ENCODE measurements at regions of chr9 and their contacts with region 1.

Region 1: GRCh38 chr9:69549310-69550202 is 122.6 kb downstream of the APBA1 start:
- DNase-seq: peak; percentile 4
- ATAC-seq: peak; percentile 68
- H3K4me3 ChIP-seq: no peak overlapping the region
- H3K27ac ChIP-seq: no peak overlapping the region
- H3K4me1 ChIP-seq: no peaks in the 10 kb centered on the region
- H3K27me3 ChIP-seq: no peaks in the 10 kb centered on the region
- CTCF ChIP-seq: peak; percentile 78

Region 2: DNA sequence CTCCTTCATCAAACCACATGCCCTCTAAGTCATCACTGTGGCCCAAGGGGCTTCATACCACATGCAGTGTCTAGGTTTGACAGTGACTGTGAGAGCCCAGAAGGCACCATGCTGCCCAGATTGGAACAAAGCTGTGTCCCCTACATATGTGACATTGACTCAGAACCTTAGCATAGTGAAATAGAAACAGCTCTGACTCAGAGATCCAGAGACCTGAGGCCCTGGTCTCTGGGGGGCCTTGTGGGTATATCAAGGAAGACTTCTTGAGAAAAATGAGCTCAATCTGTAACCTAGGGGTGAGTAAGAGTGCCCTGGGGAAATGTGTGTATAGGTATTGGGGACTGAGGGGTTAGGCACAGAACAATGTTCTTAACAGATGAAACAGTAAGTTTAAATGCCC is 231.7 kb before region 1 on chr9:
- CTCF ChIA-PET with region 1: no interaction called
- POLR2A ChIA-PET with region 1: no interaction called
- in situ Hi-C with region 1: no loop called
- intact Hi-C with region 1: no loop called
- DNase-seq: no peak
- ATAC-seq: no peak
- H3K4me3 ChIP-seq: no peak overlapping the region
- H3K27ac ChIP-seq: no peak overlapping the region
- H3K4me1 ChIP-seq: no peaks in the 10 kb centered on the region
- H3K27me3 ChIP-seq: peaks cover 3% of the 10 kb centered on the region; the same call in 1 of the 2 replicates
- CTCF ChIP-seq: no peak

Region 3: GRCh38 chr9:69421908-69422801 is 127.4 kb before region 1 on chr9:
- CTCF ChIA-PET with region 1: no interaction called
- POLR2A ChIA-PET with region 1: no interaction called
- in situ Hi-C with region 1: no loop called
- intact Hi-C with region 1: loop called (anchors 2 kb)
- DNase-seq: peak; percentile 22
- ATAC-seq: peak; percentile 88
- H3K4me3 ChIP-seq: no peak overlapping the region
- H3K27ac ChIP-seq: no peak overlapping the region
- H3K4me1 ChIP-seq: no peaks in the 10 kb centered on the region
- H3K27me3 ChIP-seq: no peaks in the 10 kb centered on the region
- CTCF ChIP-seq: peak; percentile 73